HCT116 (cell line): ENCODE measurements at regions of chr9 and their contacts with region 1.

Region 1: DNA sequence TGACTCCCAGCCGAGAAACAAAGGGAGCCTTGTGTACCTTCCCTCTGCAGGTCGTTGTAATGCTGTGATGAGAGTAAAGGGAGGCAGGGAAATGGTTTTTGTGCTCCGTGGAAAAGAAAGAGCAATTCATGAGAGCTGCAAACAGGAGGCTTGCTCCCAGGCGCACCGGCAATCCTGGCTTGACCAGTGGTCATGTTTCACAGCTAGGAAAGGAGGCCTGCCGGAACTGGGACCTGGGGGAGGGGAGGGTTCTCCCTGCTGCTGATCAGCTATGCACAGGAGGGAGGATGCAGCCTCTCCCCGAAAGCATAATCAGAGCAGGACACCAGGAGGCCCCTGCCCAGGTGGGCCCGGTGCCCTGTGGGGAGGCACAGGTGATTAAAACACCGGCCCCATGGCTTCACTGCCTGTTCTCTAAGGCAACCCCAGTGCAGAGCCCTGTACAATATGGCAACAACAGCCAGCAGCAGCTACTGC is 131.3 kb downstream of the ZDHHC21 start:
- DNase-seq: no peak
- ATAC-seq: no peak
- H3K4me3 ChIP-seq: no peak overlapping the region
- H3K27ac ChIP-seq: no peak overlapping the region
- H3K4me1 ChIP-seq: no peaks in the 10 kb centered on the region
- H3K27me3 ChIP-seq: no peaks in the 10 kb centered on the region; the same call in 1 of the 2 replicates
- CTCF ChIP-seq: no peak
- POLR2A ChIP-seq: no peak
- RAD21 ChIP-seq: no peak

Region 2: DNA sequence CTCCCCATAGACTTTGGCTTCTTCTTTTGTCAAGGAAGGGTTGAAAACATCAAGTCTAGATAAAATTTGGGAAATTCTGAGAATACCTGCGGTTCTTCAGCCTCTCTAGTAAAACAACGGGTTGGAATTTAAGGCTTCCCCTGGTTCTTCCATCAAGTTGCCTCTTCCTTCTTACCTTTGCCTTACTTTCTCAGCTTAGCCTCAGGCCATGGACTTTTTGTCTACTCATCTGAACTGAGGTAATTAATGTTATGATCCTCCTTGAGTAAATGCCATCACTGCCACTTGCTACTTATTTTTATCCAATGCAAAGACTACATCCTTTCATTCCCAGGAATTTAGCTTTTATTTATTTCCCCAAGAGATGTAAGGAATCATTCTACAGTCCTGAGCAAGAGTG is 1466.9 kb before region 1 on chr9:
- CTCF ChIA-PET with region 1: no interaction called
- POLR2A ChIA-PET with region 1: no interaction called
- RAD21 ChIA-PET with region 1: no interaction called
- intact Hi-C with region 1: loop called (anchors 5 kb)
- DNase-seq: no peak
- ATAC-seq: no peak
- H3K4me3 ChIP-seq: no peak overlapping the region
- H3K27ac ChIP-seq: no peak overlapping the region
- H3K4me1 ChIP-seq: no peaks in the 10 kb centered on the region
- H3K27me3 ChIP-seq: peaks cover 35% of the 10 kb centered on the region
- CTCF ChIP-seq: no peak
- POLR2A ChIP-seq: no peak
- RAD21 ChIP-seq: no peak